Psoas muscle (tissue), 8 donors: ENCODE measurements at regions of chr19 and their contacts with region 1.

Region 1: GRCh38 chr19:18521885-18522624 is at the start of gene ELL:
- DNase-seq: peak; percentile 100
- ATAC-seq: peak; percentile 82 to 88 (median 84)
- H3K4me3 ChIP-seq: peak within 1 kb of the TSS; percentile 100
- H3K27ac ChIP-seq: peak within 1 kb of the TSS; percentile 98
- H3K4me1 ChIP-seq: peaks cover 30% of the 10 kb centered on the region
- H3K27me3 ChIP-seq: no peaks in the 10 kb centered on the region
- CTCF ChIP-seq: peak; percentile 11
- total RNA-seq, gene ELL: 17.5 to 40.2 (median 24.9) TPM

Region 2: GRCh38 chr19:18469069-18469846 is 52.8 kb before region 1 on chr19:
- intact Hi-C with region 1: loop called in 1 of 2 experiments (anchors 2 kb)
- DNase-seq: peak; percentile 80 to 87
- ATAC-seq: peak; percentile 34 to 66 (median 46)
- H3K4me3 ChIP-seq: no peak overlapping the region
- H3K27ac ChIP-seq: peak overlapping the region; percentile 78
- H3K4me1 ChIP-seq: peaks cover 75% of the 10 kb centered on the region
- H3K27me3 ChIP-seq: no peaks in the 10 kb centered on the region
- CTCF ChIP-seq: peak; percentile 77

Region 3: GRCh38 chr19:18480006-18480691 is 41.9 kb before region 1 on chr19:
- intact Hi-C with region 1: loop called in 1 of 2 experiments (anchors 5 kb)
- DNase-seq: peak; percentile 90 to 92
- ATAC-seq: peak; percentile 71 to 83 (median 82)
- H3K4me3 ChIP-seq: no peak overlapping the region
- H3K27ac ChIP-seq: peak overlapping the region; percentile 91
- H3K4me1 ChIP-seq: peaks cover 93% of the 10 kb centered on the region
- H3K27me3 ChIP-seq: no peaks in the 10 kb centered on the region
- CTCF ChIP-seq: no peak

Region 4: GRCh38 chr19:18532168-18532890 is 10.3 kb after region 1 on chr19:
- intact Hi-C with region 1: no loop called
- DNase-seq: no peak
- ATAC-seq: no peak
- H3K4me3 ChIP-seq: no peak overlapping the region
- H3K27ac ChIP-seq: no peak overlapping the region
- H3K4me1 ChIP-seq: no peaks in the 10 kb centered on the region
- H3K27me3 ChIP-seq: no peaks in the 10 kb centered on the region
- CTCF ChIP-seq: no peak

Region 5: DNA sequence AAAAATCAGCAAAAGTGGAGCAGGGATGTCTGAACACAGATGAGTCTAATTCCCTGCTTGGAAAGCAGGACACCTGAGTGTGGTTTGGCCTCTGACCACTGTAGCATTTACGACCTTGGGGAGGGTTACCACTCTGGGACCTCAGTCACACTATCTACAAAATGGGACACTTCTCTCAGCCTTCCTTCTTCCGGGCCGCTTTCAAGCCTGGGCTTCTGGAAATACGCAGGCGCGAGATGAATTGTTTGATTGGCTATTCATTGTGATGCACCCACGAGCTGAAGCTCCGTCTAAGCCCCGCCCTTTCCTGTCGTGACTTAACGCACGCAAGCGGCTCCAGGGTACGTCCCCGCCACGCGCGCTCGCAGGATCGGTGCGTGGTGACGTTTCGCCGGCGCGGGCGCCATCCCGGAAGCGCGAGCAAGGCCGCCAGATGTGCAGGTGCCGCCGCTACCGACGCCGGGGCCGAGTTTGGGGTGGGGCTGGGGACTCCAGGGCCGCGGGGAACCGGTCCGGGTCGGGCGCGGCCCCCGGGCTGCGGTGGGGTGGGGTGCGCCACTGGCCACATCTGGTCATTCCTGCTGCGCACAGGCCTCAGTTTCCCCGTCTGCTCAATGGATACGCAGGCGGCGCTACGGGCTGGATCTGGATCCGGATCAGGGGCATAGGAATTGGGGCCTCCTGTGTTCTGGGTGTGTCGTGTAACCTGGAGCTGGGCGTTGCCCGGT is 35.6 kb after region 1 on chr19 and contains the start of gene KXD1:
- intact Hi-C with region 1: loop called (anchors 5 kb)
- DNase-seq: peak; percentile 98 to 99
- ATAC-seq: peak; percentile 98
- H3K4me3 ChIP-seq: peak within 1 kb of the TSS; percentile 88
- H3K27ac ChIP-seq: peak within 1 kb of the TSS; percentile 93
- H3K4me1 ChIP-seq: peaks cover 18% of the 10 kb centered on the region
- H3K27me3 ChIP-seq: no peaks in the 10 kb centered on the region
- CTCF ChIP-seq: no peak
- total RNA-seq, gene KXD1: 38.9 to 76.5 (median 50.8) TPM

Region 6: DNA sequence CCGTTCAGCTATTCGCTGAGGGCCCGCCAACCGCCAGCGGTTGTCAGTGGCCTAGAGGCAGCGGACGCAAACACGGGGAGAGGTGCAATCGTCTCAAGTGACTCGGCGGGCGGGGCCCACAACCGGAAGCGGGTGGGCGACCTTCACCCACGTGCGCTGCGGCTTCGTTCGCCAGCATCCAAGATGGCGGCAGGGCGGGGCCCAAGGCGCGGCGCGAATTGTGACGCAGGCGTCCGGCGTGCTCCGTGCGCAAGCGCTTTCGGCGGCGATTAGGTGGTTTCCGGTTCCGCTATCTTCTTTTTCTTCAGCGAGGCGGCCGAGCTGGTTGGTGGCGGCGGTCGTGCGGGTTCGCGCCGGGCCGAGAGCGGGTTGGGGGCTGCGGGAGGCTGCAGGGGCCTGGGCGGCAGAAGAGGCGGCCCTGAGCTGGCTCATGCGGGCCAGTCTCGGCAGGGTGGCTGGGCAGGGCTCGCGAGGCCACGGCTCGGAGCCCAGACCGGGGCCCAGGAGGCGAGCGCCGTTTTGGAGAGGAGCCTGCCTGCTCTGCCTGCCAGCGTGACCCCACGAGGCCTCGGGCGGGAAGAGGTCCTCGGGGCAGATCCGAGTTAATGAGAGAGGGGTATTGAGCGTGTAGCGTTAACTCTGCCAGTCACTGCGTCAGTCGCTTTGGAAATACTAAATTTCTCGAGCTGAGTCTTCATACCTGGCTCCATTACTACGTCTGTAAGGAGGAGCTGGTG is 49.7 kb after region 1 on chr19 and contains the start of gene UBA52:
- intact Hi-C with region 1: loop called in 1 of 2 experiments (anchors 5 kb)
- DNase-seq: peak; percentile 99
- ATAC-seq: peak; percentile 95 to 98 (median 96)
- H3K4me3 ChIP-seq: peak within 1 kb of the TSS; percentile 77
- H3K27ac ChIP-seq: peak within 1 kb of the TSS; percentile 94
- H3K4me1 ChIP-seq: peaks cover 13% of the 10 kb centered on the region
- H3K27me3 ChIP-seq: no peaks in the 10 kb centered on the region
- CTCF ChIP-seq: no peak
- total RNA-seq, gene UBA52: 979 to 1,082 (median 1,028) TPM

Region 7: GRCh38 chr19:18629166-18630088 is 107.4 kb after region 1 on chr19:
- intact Hi-C with region 1: no loop called
- DNase-seq: peak; percentile 59 to 88
- ATAC-seq: peak in 3 of 4 donors; percentile 76 to 86 (median 85)
- H3K4me3 ChIP-seq: no peak overlapping the region
- H3K27ac ChIP-seq: no peak overlapping the region
- H3K4me1 ChIP-seq: no peaks in the 10 kb centered on the region
- H3K27me3 ChIP-seq: no peaks in the 10 kb centered on the region
- CTCF ChIP-seq: no peak